K562 (cell line): ENCODE measurements at regions of chr1 and their contacts with region 1.

Region 1: GRCh38 chr1:170531758-170532657 is at the start of gene GORAB:
- DNase-seq: peak; percentile 95 to 96 (median 96)
- ATAC-seq: peak; percentile 95
- H3K4me3 ChIP-seq: peak within 1 kb of the TSS; percentile 64
- H3K27ac ChIP-seq: peak within 1 kb of the TSS; percentile 95
- H3K4me1 ChIP-seq: peaks cover 0 to 9% of the 10 kb centered on the region in 2 experiments; a peak in 2 of 5 replicates
- H3K27me3 ChIP-seq: no peaks in the 10 kb centered on the region
- CTCF ChIP-seq: no peak
- EP300 ChIP-seq: no peak
- POLR2A ChIP-seq: peak; percentile 96
- RAD21 ChIP-seq: no peak
- polyA plus RNA-seq, gene GORAB: 4.4 to 8.9 TPM

Region 2: DNA sequence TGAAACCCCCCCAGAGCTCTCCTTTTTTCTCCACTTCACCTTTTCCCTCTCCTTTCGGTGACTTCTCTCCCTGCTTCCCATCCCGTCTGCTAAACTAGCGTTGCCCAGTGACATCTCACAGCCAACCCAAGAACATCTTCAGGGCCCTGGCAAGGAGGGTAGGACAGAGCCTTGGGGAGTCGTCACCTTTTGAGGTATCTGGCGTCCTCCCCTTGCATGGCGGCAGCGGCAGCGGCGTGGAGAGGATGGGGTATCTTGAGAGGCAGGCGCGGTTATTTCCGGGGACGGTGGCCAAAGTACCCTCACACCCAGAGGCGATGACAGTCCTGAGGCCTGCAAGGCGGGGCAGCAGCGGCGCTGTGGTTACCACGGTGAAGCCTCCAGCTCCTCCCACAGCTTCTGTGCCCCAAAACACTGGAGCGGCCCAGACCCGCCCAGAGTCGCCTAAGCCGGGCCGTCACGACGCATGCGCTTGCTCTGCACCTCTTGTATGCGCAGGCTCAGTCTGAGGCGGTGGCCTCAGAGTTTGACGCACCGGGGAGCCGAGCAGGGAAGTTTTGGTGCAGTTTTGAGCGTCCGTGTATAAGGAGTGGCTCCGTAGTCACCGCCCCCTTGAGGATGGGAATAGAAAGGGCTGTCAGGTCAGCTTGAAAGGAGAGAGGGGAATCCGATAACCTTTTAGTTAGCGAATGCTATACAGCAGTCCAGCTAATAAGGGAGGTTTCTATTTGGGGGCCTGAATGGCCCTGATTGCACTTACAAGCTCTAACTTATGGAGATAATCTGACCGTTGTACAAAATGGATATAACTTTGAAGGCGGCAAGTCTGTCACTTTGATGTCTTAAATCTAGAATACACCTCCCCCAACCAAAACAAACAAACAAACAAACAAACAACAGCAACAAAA is 457.5 kb before region 1 on chr1 and contains the start of gene KIFAP3:
- CTCF ChIA-PET with region 1: no interaction called
- POLR2A ChIA-PET with region 1: interaction called, 3 read pairs
- in situ Hi-C with region 1: no loop called
- intact Hi-C with region 1: loop called (anchors 5 kb)
- DNase-seq: peak; percentile 95 to 100 (median 97)
- ATAC-seq: peak; percentile 99
- H3K4me3 ChIP-seq: peak within 1 kb of the TSS; percentile 59
- H3K27ac ChIP-seq: peak within 1 kb of the TSS; percentile 54
- H3K4me1 ChIP-seq: peaks cover 6% of the 10 kb centered on the region in 2 experiments; a peak in 4 of 5 replicates
- H3K27me3 ChIP-seq: no peaks in the 10 kb centered on the region
- CTCF ChIP-seq: peak; percentile 56 to 75 (median 75)
- EP300 ChIP-seq: no peak
- POLR2A ChIP-seq: peak; percentile 65
- RAD21 ChIP-seq: peak; percentile 56 to 65
- polyA plus RNA-seq, gene KIFAP3: 11.7 to 16.3 TPM

Region 3: GRCh38 chr1:171397851-171398469 is 866.0 kb after region 1 on chr1:
- CTCF ChIA-PET with region 1: no interaction called
- POLR2A ChIA-PET with region 1: no interaction called
- in situ Hi-C with region 1: no loop called
- intact Hi-C with region 1: loop called (anchors 10 kb)
- DNase-seq: no peak
- ATAC-seq: no peak
- H3K4me3 ChIP-seq: no peak overlapping the region
- H3K27ac ChIP-seq: no peak overlapping the region
- H3K4me1 ChIP-seq: peaks cover 0 to 5% of the 10 kb centered on the region in 2 experiments; a peak in 1 of 5 replicates
- H3K27me3 ChIP-seq: peaks cover 0 to 9% of the 10 kb centered on the region in 2 experiments; a peak in 1 of 5 replicates
- CTCF ChIP-seq: no peak
- EP300 ChIP-seq: no peak
- POLR2A ChIP-seq: no peak
- RAD21 ChIP-seq: no peak

Region 4: DNA sequence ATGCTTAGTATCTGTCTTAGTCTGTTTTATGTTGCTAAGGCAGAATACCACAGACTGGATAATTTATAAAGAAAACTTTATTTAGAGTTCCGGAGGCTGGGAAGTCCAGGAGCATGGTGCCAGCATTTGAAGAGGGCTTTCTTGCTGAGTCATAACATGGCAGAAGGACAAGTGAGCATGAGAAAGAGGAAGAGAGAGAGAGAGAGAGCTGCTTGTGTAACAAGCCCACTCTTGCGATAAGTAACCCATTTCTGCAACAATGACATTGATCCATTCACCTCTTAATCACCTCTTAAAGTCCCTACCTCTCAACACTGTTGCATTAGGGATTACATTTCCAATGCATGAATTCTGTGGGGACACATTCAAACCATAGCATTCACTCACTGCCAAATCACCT is 1078.4 kb after region 1 on chr1:
- CTCF ChIA-PET with region 1: no interaction called
- POLR2A ChIA-PET with region 1: no interaction called
- in situ Hi-C with region 1: loop called (anchors 25 kb)
- intact Hi-C with region 1: no loop called
- DNase-seq: no peak
- ATAC-seq: no peak
- H3K4me3 ChIP-seq: no peak overlapping the region
- H3K27ac ChIP-seq: no peak overlapping the region
- H3K4me1 ChIP-seq: peaks cover 0 to 6% of the 10 kb centered on the region in 2 experiments; a peak in 2 of 5 replicates
- H3K27me3 ChIP-seq: no peaks in the 10 kb centered on the region; a peak in 1 of 5 replicates
- CTCF ChIP-seq: no peak
- EP300 ChIP-seq: no peak
- POLR2A ChIP-seq: no peak
- RAD21 ChIP-seq: no peak